Heart left ventricle (tissue), 16 donors: ENCODE measurements at regions of chr20 and their contacts with region 1.

Region 1: GRCh38 chr20:21981597-21982344 is 276.3 kb downstream of the PAX1 start:
- DNase-seq: peak in 2 of 5 donors; percentile 28 to 42
- ATAC-seq: peak; percentile 69 to 94 (median 88)
- H3K4me3 ChIP-seq: no peak overlapping the region
- H3K27ac ChIP-seq: peak overlapping the region in 6 of 12 donors; percentile 30 to 52 (median 43)
- H3K4me1 ChIP-seq: peaks cover 0 to 14% (median 0%) of the 10 kb centered on the region in 12 donors
- H3K27me3 ChIP-seq: no peaks in the 10 kb centered on the region
- CTCF ChIP-seq: no peak
- POLR2A ChIP-seq: no peak

Region 2: GRCh38 chr20:22027423-22027822 is 45.7 kb after region 1 on chr20:
- intact Hi-C with region 1: loop called in 1 of 10 experiments (anchors 5 kb)
- DNase-seq: no peak
- ATAC-seq: no peak
- H3K4me3 ChIP-seq: no peak overlapping the region
- H3K27ac ChIP-seq: no peak overlapping the region
- H3K4me1 ChIP-seq: no peaks in the 10 kb centered on the region
- H3K27me3 ChIP-seq: no peaks in the 10 kb centered on the region
- CTCF ChIP-seq: no peak
- POLR2A ChIP-seq: no peak

Region 3: DNA sequence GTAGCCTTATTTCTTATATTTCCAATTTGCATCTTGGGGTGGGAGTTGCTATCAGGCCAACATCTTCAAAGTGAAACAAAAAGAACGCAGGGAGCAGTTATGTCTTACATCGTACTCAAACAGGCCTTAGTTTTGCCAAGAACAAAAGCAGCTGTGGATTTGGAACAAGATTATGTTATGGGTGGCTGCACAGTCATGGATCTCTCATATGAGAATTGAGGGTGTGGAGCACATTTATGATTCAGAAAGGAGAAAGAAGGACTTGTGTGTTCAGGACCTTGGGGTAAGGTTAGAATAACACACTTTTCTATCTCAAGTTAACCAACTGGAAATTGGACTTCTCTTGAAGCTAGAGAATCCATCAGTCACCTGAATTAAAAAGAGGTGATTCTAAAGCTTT is 342.7 kb after region 1 on chr20:
- intact Hi-C with region 1: no loop called
- DNase-seq: no peak
- ATAC-seq: no peak
- H3K4me3 ChIP-seq: no peak overlapping the region
- H3K27ac ChIP-seq: no peak overlapping the region
- H3K4me1 ChIP-seq: no peaks in the 10 kb centered on the region
- H3K27me3 ChIP-seq: peaks cover 0 to 22% (median 0%) of the 10 kb centered on the region in 9 donors
- CTCF ChIP-seq: no peak
- POLR2A ChIP-seq: no peak